Heart right ventricle (tissue), 16 donors: ENCODE measurements at regions of chr6 and their contacts with region 1.

Region 1: DNA sequence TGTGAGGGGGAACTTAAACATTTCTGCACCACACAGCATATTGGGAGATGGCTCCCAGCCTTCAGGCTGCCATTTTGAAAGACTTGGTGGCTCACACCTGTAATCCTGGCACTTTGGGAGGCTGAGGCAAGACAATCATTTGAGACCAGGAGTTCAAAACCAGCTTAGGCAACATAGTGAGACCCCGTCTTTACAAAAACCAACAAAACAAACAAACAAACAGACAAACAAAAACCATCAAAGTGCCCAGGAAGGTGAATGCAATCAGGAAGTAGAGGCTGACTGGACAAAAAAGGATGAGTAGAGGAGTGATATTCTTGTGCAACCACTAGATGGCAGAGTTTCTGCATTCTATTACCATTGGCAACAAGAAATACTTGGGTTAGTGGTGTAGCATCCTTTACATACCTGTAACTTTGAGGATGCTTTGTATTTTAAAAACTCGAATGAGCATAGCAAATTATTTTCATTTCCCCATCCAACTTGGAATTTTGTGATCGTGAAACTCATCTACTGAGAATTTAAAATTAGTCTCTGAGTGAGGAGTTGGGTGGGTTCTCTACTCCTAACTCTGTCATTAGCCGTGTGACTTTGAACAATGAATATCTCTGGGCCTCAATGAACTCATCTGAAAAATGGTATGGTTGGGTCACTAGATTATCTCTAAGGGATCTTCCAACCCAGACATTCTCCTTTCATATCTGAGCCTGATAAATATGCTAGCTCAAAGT is 84.4 kb downstream of the CRYBG1 start:
- DNase-seq: peak in 1 of 2 donors; percentile 22
- ATAC-seq: peak in 6 of 8 donors; percentile 59 to 74 (median 68)
- H3K4me3 ChIP-seq: no peak overlapping the region
- H3K27ac ChIP-seq: no peak overlapping the region
- H3K4me1 ChIP-seq: peaks cover 0 to 29% (median 0%) of the 10 kb centered on the region in 9 donors
- H3K27me3 ChIP-seq: peaks cover 0 to 37% (median 34%) of the 10 kb centered on the region in 7 donors
- CTCF ChIP-seq: peak; percentile 58 to 83 (median 76)

Region 2: DNA sequence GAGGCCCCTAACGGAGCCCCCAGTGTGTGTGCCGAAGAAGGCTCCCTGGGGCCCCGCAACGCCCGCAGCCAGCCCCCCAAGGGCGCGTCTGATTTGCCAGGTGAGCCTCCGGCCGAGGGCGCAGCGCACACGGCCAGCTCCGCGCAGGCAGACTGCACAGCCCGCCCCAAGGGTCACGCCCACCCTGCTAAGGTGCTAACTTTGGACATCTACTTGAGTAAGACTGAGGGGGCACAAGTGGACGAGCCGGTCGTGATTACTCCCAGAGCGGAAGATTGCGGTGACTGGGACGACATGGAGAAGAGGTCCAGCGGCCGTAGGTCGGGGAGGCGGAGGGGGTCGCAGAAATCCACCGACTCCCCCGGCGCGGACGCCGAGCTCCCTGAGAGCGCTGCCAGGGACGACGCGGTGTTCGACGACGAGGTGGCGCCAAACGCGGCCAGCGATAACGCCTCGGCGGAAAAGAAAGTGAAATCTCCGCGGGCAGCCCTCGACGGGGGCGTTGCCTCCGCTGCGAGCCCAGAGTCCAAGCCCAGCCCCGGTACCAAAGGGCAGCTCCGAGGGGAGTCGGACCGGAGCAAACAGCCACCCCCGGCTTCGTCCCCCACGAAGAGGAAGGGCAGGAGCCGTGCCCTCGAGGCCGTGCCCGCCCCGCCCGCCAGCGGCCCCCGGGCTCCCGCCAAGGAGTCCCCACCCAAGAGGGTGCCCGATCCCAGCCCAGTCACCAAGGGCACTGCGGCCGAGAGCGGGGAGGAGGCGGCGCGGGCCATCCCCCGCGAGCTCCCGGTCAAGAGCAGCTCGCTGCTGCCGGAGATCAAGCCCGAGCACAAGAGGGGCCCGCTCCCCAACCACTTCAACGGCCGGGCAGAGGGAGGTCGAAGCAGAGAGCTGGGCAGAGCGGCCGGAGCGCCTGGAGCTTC is 67.4 kb after region 1 on chr6:
- intact Hi-C with region 1: loop called in 1 of 10 experiments (anchors 10 kb)
- DNase-seq: peak; percentile 70 to 71
- ATAC-seq: peak; percentile 80 to 90 (median 86)
- H3K4me3 ChIP-seq: peak overlapping the region; percentile 53 to 93 (median 74)
- H3K27ac ChIP-seq: peak overlapping the region; percentile 38 to 98 (median 78)
- H3K4me1 ChIP-seq: peaks cover 7 to 77% (median 25%) of the 10 kb centered on the region in 9 donors
- H3K27me3 ChIP-seq: peaks cover 0 to 57% (median 46%) of the 10 kb centered on the region in 7 donors
- CTCF ChIP-seq: peak in 5 of 9 donors; percentile 16 to 53 (median 48)

Region 3: DNA sequence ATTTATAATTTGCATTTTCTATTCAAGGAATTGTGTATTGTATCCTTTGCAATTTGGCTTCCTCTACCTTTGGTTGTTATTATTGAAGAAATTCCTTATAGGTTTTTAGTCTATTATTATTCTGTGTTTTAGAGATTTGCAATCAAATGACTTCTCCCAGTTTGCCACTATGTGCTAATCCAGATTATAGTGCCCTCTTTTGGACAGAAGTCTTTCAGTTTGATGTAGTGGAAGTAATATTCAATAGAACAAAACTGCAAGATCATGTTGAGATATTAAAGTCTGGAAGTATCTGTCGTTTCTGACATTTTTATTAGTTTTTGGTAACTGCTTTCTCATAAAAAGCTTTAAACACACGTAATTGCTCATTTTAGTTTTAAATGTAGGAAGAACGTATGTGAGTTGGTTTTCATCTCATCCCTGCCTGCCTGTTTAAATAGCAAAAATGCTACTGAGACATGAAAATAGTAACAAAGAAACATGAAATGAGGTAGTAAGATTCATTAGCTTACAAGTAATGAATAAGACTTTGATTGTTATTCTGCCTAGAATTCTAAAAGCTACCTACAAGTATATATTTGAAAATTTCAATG is 111.5 kb after region 1 on chr6:
- intact Hi-C with region 1: loop called in 1 of 10 experiments (anchors 5 kb)
- DNase-seq: no peak
- ATAC-seq: no peak
- H3K4me3 ChIP-seq: no peak overlapping the region
- H3K27ac ChIP-seq: no peak overlapping the region
- H3K4me1 ChIP-seq: peaks cover 0 to 14% (median 0%) of the 10 kb centered on the region in 9 donors
- H3K27me3 ChIP-seq: no peaks in the 10 kb centered on the region
- CTCF ChIP-seq: peak in 6 of 9 donors; percentile 34 to 65 (median 47)

Region 4: GRCh38 chr6:106568530-106568929 is 123.6 kb after region 1 on chr6:
- intact Hi-C with region 1: loop called (anchors 1 to 5 kb)
- DNase-seq: no peak
- ATAC-seq: no peak
- H3K4me3 ChIP-seq: no peak overlapping the region
- H3K27ac ChIP-seq: no peak overlapping the region
- H3K4me1 ChIP-seq: peaks cover 0 to 9% (median 0%) of the 10 kb centered on the region in 9 donors
- H3K27me3 ChIP-seq: no peaks in the 10 kb centered on the region
- CTCF ChIP-seq: no peak

Region 5: DNA sequence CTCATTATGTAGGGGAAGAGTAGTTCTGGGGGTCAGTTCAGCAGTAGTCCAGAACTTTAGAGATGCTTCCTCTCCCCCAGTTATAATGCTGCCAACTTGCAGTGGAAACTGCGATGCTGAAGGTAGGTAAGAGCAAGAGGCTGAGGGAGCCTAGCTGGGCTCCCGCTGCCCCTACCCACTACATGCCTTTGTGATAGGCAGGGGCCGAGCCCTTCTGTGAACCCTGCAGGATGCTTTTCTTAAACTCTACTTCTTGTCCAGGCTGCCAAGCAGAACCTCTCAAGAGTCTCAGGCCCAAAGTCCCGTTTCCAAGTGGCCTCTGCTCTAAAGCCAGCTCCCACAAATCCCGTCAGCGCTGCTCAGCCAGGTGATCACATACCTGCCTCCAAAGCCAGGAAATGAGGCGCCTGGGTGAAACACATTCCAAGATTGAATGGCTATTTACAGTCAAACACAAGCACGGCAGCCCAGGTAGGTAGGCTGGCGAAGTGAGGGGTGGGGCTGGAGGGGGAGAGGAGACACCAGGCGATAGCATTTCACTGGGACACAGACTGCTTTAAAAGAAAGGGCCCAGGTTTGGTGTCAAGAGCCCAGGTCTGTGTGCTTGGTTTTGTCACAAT is 378.9 kb after region 1 on chr6:
- intact Hi-C with region 1: no loop called
- DNase-seq: no peak
- ATAC-seq: no peak
- H3K4me3 ChIP-seq: no peak overlapping the region
- H3K27ac ChIP-seq: no peak overlapping the region
- H3K4me1 ChIP-seq: no peaks in the 10 kb centered on the region
- H3K27me3 ChIP-seq: peaks cover 0 to 4% (median 0%) of the 10 kb centered on the region in 7 donors
- CTCF ChIP-seq: no peak

Region 6: DNA sequence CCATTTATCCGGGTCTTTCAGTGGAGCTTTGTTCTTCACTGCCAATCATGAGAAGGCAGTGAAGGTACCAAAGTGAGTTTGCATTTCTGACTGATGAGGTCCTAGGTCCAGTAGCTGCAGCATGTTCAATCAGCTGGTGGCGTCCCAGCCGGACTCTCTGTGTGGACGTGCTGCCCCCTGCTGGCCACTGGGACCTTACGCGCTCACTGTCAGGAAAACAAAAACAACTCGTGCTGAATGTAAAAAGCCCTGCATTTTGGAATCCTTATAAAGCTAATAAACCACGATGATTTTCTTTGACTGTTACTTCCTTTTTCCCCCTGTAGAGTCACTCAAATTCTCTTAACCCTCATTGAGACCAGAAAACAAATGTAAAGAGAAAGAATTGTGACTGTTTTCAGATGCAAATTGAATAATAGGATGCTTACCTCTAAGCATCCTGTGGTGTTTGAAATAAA is 534.5 kb after region 1 on chr6:
- intact Hi-C with region 1: loop called in 9 of 10 experiments (anchors 2 to 5 kb)
- DNase-seq: peak; percentile 79 to 83
- ATAC-seq: peak; percentile 49 to 88 (median 76)
- H3K4me3 ChIP-seq: no peak overlapping the region
- H3K27ac ChIP-seq: no peak overlapping the region
- H3K4me1 ChIP-seq: peaks cover 2 to 11% (median 6%) of the 10 kb centered on the region in 9 donors
- H3K27me3 ChIP-seq: peaks cover 14 to 93% (median 75%) of the 10 kb centered on the region in 7 donors
- CTCF ChIP-seq: peak; percentile 86 to 96 (median 94)